Activated B cell treated with CpG ODN at 0.5 μM for 24 hours (primary cell): ENCODE measurements at regions of chrX and their contacts with region 1.

Region 1: DNA sequence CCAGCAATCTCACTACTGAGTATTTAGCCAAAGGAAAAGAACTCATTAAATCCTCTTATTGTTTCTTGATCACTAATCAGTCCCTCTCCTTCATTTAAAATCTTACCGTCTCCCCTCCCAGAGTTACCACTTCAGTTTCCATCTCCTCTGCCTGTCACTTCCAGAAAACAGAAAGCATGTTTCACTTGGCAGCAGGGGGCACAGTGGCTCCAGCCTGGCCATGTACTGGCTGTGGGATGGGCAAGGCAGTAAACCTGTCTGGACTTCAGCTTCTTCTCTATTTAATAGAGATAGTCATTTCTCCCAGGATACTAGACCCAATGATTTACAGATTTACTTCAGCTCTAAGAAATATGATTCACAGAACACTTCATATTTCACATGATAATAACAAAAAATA is 63.2 kb downstream of the CD40LG start:
- DNase-seq: no peak
- ATAC-seq: peak; percentile 42
- H3K4me3 Mint-ChIP-seq: peak overlapping the region; percentile 45
- H3K27ac Mint-ChIP-seq: peak overlapping the region; percentile 98
- H3K4me1 Mint-ChIP-seq: peaks cover 42% of the 10 kb centered on the region
- H3K27me3 Mint-ChIP-seq: no peaks in the 10 kb centered on the region
- CTCF ChIP-seq: no peak

Region 2: DNA sequence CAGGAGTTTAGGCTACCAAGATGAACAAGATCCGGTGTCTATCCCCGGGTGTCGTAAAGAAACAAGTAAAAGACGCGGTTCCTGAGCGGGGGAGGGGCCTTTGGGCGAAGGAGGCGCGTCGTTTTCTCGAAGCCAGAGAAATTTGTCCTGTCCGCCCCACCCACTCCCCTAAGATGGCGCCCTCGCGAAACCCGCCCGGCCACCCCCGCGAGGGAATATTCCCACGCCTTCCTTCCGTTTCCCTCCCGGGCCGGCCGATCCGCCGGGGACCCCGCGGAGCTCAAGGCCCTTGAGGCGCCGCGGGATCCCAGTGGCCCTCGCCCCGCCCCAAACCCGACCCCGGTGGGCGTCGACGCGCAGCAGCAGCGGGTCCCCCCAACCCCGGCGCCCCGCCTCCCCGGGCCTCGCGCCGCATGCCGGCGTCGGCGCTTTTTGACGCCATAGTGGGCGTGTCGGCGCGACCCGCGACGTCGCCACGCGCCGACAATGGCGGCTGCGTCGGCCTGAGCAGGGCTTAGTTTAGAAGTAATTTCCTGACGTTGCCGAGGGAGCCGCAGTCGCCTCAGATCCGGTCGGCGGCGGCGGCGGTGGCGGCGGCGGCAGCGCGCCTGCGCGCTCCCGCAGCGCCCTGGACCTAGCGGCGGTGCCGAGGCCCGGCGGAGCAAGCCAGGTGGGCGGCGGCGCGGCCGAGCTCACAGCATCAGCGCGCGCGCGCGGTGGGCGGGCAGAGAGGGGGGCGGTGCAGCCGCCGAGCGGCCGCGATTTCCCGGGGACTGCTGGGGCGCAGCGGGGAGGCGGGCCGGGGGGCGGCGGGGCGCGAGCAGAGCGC is 214.2 kb before region 1 on chrX and contains the start of gene HTATSF1:
- CTCF ChIA-PET with region 1: no interaction called
- POLR2A ChIA-PET with region 1: no interaction called
- intact Hi-C with region 1: loop called (anchors 5 kb)
- DNase-seq: peak; percentile 79
- ATAC-seq: peak; percentile 81
- H3K4me3 Mint-ChIP-seq: peak within 1 kb of the TSS; percentile 89
- H3K27ac Mint-ChIP-seq: peak within 1 kb of the TSS; percentile 97
- H3K4me1 Mint-ChIP-seq: peaks cover 22% of the 10 kb centered on the region
- H3K27me3 Mint-ChIP-seq: no peaks in the 10 kb centered on the region
- CTCF ChIP-seq: no peak
- total RNA-seq, gene HTATSF1: 23.9 and 24.5 TPM in 2 replicates

Region 3: GRCh38 chrX:136679531-136679930 is 31.6 kb before region 1 on chrX:
- CTCF ChIA-PET with region 1: no interaction called
- POLR2A ChIA-PET with region 1: no interaction called
- intact Hi-C with region 1: no loop called
- DNase-seq: no peak
- ATAC-seq: no peak
- H3K4me3 Mint-ChIP-seq: no peak overlapping the region
- H3K27ac Mint-ChIP-seq: no peak overlapping the region
- H3K4me1 Mint-ChIP-seq: peaks cover 2% of the 10 kb centered on the region
- H3K27me3 Mint-ChIP-seq: no peaks in the 10 kb centered on the region
- CTCF ChIP-seq: no peak

Region 4: GRCh38 chrX:136694431-136695087 is 16.6 kb before region 1 on chrX:
- CTCF ChIA-PET with region 1: interaction called, 10 read pairs
- POLR2A ChIA-PET with region 1: interaction called, 6 read pairs
- intact Hi-C with region 1: no loop called
- DNase-seq: no peak
- ATAC-seq: peak; percentile 78
- H3K4me3 Mint-ChIP-seq: peak overlapping the region; percentile 53
- H3K27ac Mint-ChIP-seq: peak overlapping the region; percentile 90
- H3K4me1 Mint-ChIP-seq: peaks cover 45% of the 10 kb centered on the region
- H3K27me3 Mint-ChIP-seq: no peaks in the 10 kb centered on the region
- CTCF ChIP-seq: no peak

Region 5: DNA sequence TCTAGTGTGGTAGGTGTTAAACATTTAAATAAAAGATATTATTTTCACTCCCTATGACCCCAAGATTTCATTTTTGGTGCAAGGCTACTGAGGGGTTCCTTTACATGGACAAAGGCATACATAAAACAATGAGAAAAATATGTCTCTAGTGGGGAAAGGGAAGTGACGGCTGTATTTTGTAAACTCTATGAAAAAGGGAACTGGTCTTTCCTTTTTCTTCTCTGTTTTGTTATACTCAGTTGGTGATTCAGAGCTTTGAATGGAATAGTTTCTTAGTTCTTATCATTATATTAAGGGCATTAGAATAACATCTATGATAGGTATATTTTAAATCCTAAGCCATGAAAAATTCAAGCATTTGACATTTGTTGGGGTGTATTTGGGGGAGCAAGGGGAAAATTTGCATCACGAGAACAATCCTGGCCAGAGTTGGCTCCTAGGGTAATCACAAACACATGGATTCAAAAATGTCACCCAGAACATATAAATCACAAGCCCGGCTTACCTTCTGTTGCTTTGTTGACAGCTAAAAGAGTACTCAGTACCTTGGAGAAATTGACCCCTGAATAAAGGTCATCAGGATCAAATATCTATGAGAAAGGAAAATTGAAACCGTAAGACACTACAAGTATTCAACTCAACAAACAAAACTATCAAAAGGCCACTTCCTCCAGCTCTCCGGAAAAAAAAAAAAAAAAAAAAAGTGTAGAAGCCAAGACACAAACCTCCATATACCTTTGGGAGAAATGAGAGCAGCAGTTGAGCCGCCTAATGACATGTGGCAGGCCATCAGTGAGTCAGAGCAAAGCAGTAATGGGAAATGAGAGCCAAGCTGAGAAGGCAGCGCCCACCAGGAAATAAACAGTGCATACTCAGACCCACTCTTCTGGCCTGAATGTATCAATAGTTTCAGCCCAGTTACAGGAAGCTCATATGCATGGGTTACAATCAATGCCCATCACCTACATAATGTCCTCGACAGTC is 36.1 kb after region 1 on chrX:
- CTCF ChIA-PET with region 1: interaction called, 6 read pairs
- POLR2A ChIA-PET with region 1: interaction called, 6 read pairs
- intact Hi-C with region 1: loop called (anchors 2 kb)
- DNase-seq: no peak
- ATAC-seq: peak; percentile 81
- H3K4me3 Mint-ChIP-seq: peak overlapping the region; percentile 69
- H3K27ac Mint-ChIP-seq: peak overlapping the region; percentile 95
- H3K4me1 Mint-ChIP-seq: peaks cover 79% of the 10 kb centered on the region
- H3K27me3 Mint-ChIP-seq: no peaks in the 10 kb centered on the region
- CTCF ChIP-seq: no peak

Region 6: GRCh38 chrX:136880452-136881013 is 169.4 kb after region 1 on chrX and contains the start of gene RBMX:
- CTCF ChIA-PET with region 1: interaction called, 8 read pairs
- POLR2A ChIA-PET with region 1: interaction called, 25 read pairs
- intact Hi-C with region 1: loop called (anchors 1 kb)
- DNase-seq: peak; percentile 70
- ATAC-seq: peak; percentile 87
- H3K4me3 Mint-ChIP-seq: peak within 1 kb of the TSS; percentile 93
- H3K27ac Mint-ChIP-seq: peak within 1 kb of the TSS; percentile 98
- H3K4me1 Mint-ChIP-seq: peaks cover 9% of the 10 kb centered on the region
- H3K27me3 Mint-ChIP-seq: no peaks in the 10 kb centered on the region
- CTCF ChIP-seq: no peak
- total RNA-seq, gene RBMX: 259 and 260 TPM in 2 replicates

Region 7: DNA sequence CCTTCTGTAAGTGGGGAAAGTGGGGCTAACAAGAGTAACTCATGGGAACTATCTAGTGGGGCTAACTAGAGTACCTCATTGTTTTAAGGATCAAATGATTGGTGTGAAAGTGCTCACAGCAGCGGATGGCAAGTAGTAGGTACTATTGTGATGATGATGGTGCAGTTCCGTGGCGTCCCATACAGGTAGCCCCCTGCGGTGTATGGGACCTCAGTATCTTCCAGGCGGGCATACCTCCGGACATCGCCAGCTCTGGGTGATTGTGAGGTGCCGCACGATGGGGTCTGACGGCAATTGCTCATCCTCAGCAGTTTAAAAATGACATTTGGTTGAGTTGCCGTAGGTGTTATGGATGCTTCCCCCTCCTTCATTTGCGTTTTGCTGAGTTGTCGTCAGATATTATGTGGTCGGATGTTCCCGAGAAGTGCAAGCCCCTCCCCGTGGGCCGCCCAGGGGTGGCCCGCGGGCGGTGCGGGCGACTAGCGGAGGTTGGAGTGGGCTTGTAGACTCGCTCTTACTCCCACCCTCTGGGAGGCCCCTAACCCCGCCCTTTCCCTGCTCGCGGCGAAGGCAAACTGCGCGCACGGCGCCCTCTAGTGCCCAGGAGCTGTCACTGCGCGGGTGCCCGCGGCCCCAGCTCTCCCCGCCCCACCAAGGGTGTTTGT is 341.0 kb after region 1 on chrX:
- CTCF ChIA-PET with region 1: interaction called, 3 read pairs
- POLR2A ChIA-PET with region 1: no interaction called
- intact Hi-C with region 1: loop called (anchors 1 kb)
- DNase-seq: peak; percentile 68
- ATAC-seq: peak; percentile 98
- H3K4me3 Mint-ChIP-seq: peak overlapping the region; percentile 87
- H3K27ac Mint-ChIP-seq: no peak overlapping the region
- H3K4me1 Mint-ChIP-seq: peaks cover 11% of the 10 kb centered on the region
- H3K27me3 Mint-ChIP-seq: peaks cover 16% of the 10 kb centered on the region
- CTCF ChIP-seq: no peak